A673 (cell line): ENCODE measurements at regions of chr11 and their contacts with region 1.

Region 1: GRCh38 chr11:33161120-33162005 is at the start of gene CSTF3:
- DNase-seq: peak; percentile 100
- H3K4me3 ChIP-seq: peak within 1 kb of the TSS; percentile 56
- H3K27ac ChIP-seq: peak within 1 kb of the TSS; percentile 80
- H3K4me1 ChIP-seq: peaks cover 29% of the 10 kb centered on the region
- H3K27me3 ChIP-seq: no peaks in the 10 kb centered on the region
- CTCF ChIP-seq: peak; percentile 55
- total RNA-seq, gene CSTF3: 121 and 125 TPM in 2 replicates

Region 2: DNA sequence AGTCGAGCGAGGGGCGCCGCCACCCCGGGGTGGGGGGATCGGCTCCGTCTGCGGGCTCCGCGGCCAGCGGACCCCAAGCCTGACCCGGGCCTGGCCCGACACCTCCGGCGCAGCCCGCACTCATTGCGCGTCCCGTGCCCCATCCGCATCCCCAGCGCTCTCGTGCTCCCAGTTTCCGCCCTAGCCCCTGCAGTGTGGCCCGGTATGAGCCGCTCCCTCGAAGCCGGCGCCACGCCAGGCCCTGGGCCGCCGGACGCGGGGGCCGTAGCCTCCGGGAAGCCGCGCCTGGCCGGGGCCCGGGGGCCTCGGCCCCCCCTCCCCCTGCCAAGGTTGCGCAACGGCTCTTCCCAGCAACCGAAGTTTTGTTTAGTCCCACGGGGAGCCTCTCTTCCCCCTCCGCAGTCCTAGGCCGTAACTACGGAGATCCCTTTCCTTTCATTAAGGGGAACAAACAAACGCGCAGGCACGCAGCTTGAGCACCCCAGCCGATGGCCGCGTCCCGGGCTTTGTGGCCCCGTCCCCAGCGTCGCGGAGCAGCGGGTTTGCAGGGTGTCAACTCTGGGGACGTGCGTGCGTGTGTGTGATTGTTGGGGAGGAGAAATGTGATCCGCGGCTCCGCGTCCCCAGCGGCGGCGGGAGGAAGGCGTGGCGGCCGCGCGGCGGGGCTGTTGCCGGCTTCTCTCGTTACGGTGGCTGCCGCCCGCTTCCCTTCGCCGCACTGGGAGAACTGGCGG is 96.7 kb after region 1 on chr11:
- CTCF ChIA-PET with region 1: interaction called, 3 read pairs
- POLR2A ChIA-PET with region 1: no interaction called
- intact Hi-C with region 1: loop called (anchors 5 kb)
- DNase-seq: peak; percentile 97
- H3K4me3 ChIP-seq: peak overlapping the region; percentile 66
- H3K27ac ChIP-seq: peak overlapping the region; percentile 97
- H3K4me1 ChIP-seq: peaks cover 35% of the 10 kb centered on the region
- H3K27me3 ChIP-seq: no peaks in the 10 kb centered on the region
- CTCF ChIP-seq: peak; percentile 58; the same call in 1 of the 2 replicates

Region 3: DNA sequence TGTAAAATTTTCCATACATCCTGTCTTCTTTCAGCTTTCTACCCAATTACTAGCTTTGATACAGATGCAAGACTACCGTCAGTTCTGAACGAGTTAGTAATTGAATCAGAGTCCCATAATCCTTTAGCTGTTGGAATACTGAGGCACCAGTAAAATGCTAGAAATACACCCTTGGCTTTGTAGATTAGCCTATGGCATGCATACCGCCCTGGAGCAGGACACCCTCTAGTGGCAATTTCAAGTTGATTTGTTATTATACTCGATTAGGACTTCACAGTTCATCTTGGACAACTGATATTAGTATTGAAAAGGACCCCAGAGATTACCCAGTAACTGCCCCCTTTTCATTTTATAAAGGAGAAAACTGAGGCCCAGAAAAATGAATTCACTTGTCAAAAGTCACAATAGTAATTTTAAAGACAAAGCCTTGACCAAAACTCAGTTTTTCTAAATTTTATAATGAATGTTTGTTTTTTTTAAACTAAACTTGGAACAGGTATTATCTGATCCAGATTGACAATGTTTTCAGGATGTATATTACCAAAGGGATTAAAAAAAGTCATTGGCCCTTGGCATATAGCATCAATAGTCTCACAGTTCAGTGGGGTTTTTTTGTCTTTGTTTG is 168.5 kb after region 1 on chr11:
- CTCF ChIA-PET with region 1: interaction called, 20 read pairs
- POLR2A ChIA-PET with region 1: no interaction called
- intact Hi-C with region 1: loop called (anchors 1 kb)
- DNase-seq: peak; percentile 92
- H3K4me3 ChIP-seq: no peak overlapping the region
- H3K27ac ChIP-seq: no peak overlapping the region
- H3K4me1 ChIP-seq: peaks cover 15% of the 10 kb centered on the region
- H3K27me3 ChIP-seq: no peaks in the 10 kb centered on the region
- CTCF ChIP-seq: peak; percentile 99

Region 4: GRCh38 chr11:33736148-33736809 is 574.9 kb after region 1 on chr11 and contains the start of gene CD59:
- CTCF ChIA-PET with region 1: no interaction called
- POLR2A ChIA-PET with region 1: no interaction called
- intact Hi-C with region 1: loop called (anchors 5 kb)
- DNase-seq: peak; percentile 99
- H3K4me3 ChIP-seq: peak within 1 kb of the TSS; percentile 67
- H3K27ac ChIP-seq: peak within 1 kb of the TSS; percentile 74
- H3K4me1 ChIP-seq: peaks cover 22% of the 10 kb centered on the region
- H3K27me3 ChIP-seq: no peaks in the 10 kb centered on the region
- CTCF ChIP-seq: no peak
- total RNA-seq, gene CD59: 193 and 204 TPM in 2 replicates

Region 5: DNA sequence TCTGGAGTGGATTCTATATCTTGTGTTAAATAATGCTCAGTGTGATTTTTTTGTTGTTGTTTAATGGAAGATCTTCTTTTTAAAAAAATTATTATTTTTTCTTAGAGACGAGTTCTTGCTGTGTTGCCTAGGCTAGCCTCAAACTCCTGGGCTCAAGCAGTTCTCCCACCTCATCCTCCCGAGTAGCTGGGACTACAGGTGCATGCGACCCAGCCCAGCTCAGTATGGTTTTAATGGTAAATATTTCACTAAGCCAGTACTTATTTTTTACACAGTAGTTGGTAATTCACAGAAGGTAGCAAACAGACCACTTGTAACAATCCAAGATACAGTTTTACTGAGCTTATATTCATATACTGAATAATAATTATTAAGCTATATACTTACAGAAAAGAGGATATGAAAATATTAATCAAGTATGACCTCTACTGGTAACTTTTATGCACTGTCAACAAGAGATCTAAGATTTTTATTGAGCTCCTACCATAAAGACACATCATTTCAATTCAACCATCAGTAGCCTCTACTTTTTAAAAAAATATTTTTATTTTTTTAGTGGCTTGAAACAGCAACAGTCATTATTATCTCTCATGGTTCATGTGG is 581.0 kb after region 1 on chr11:
- CTCF ChIA-PET with region 1: interaction called, 19 read pairs
- POLR2A ChIA-PET with region 1: no interaction called
- intact Hi-C with region 1: loop called (anchors 5 kb)
- DNase-seq: peak; percentile 62
- H3K4me3 ChIP-seq: no peak overlapping the region
- H3K27ac ChIP-seq: no peak overlapping the region
- H3K4me1 ChIP-seq: no peaks in the 10 kb centered on the region
- H3K27me3 ChIP-seq: no peaks in the 10 kb centered on the region
- CTCF ChIP-seq: peak; percentile 87